IMR-90 (cell line): ENCODE measurements at regions of chr17 and their contacts with region 1.

Region 1: DNA sequence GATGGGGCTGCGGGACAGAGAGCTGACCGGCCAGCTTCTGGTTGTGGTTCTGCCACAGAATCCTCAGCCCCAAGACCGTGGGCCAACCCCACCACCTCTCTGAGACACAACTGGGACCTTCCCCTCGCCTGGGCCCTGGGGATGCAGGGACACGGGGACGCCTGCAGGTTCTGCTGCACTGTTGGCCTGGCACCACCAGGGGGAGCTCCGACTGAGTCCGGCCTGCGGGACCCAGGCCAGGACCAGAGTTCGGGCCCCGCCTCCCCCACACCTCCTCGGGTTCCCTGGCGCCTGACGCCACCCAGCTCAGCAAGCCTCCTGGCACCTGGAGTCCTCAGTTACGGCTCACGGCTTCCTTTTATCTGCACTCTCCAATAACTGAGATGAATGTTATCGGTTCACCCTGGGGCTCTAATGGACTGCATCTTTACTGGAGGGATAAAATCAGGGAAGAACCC is 27.3 kb downstream of the TBC1D16 start:
- DNase-seq: peak; percentile 48
- ATAC-seq: peak; percentile 93
- H3K4me3 ChIP-seq: no peak overlapping the region
- H3K27ac ChIP-seq: no peak overlapping the region
- H3K4me1 ChIP-seq: no peaks in the 10 kb centered on the region; the same call in 1 of the 2 replicates
- H3K27me3 ChIP-seq: no peaks in the 10 kb centered on the region
- CTCF ChIP-seq: peak; percentile 85
- POLR2A ChIP-seq: no peak
- RAD21 ChIP-seq: peak; percentile 69

Region 2: DNA sequence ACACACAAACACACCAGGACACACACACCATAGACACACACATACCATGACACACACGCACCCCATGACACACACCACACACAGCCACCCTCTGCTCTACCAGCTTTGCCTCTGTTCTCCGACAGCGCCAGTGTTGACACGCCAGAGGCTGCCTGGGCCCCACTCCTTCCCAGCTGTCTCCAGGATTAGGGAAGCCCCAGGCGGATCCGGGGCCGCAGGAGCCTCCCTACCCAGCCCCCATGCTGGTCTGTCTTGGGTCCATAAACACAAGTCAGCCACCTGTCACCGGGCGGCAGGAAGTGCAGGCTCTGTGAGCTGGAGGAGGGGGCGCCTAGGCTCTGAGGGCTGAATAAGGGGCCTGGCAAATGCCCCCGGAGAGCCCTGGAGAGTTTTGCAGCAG is 16.7 kb after region 1 on chr17:
- CTCF ChIA-PET with region 1: no interaction called
- POLR2A ChIA-PET with region 1: no interaction called
- dilution Hi-C with region 1: no loop called
- in situ Hi-C with region 1: no loop called
- intact Hi-C with region 1: no loop called
- DNase-seq: no peak
- ATAC-seq: no peak
- H3K4me3 ChIP-seq: no peak overlapping the region
- H3K27ac ChIP-seq: no peak overlapping the region
- H3K4me1 ChIP-seq: peaks cover 22% of the 10 kb centered on the region
- H3K27me3 ChIP-seq: no peaks in the 10 kb centered on the region
- CTCF ChIP-seq: no peak
- POLR2A ChIP-seq: no peak
- RAD21 ChIP-seq: no peak

Region 3: DNA sequence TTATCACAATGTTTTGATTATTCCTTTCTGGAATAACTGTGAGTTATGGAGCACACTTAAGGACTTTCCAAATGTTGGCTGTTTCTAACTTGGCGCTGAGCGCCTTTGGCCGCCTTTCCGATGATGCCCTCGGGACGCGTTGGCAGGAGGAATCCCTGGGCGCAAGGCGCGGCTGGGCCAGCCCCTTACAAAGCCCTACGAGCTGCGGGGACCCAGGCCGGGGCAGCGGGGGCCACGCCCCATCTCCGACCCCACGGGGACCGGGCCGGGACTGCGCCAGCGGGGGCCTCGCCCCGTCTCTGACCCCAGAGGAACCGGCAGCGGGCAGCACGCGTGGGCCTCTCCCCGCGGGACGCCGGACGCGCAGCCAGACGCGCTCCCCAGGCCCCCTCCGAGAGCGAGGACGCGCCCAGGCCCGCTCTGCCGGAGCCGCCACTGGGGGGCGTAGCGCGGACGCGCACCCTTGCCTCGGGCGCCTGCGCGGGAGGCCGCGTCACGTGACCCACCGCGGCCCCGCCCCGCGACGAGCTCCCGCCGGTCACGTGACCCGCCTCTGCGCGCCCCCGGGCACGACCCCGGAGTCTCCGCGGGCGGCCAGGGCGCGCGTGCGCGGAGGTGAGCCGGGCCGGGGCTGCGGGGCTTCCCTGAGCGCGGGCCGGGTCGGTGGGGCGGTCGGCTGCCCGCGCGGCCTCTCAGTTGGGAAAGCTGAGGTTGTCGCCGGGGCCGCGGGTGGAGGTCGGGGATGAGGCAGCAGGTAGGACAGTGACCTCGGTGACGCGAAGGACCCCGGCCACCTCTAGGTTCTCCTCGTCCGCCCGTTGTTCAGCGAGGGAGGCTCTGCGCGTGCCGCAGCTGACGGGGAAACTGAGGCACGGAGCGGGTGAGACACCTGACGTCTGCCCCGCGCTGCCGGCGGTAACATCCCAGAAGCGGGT is 92.9 kb after region 1 on chr17 and contains the start of gene GAA:
- CTCF ChIA-PET with region 1: no interaction called
- POLR2A ChIA-PET with region 1: no interaction called
- dilution Hi-C with region 1: no loop called
- in situ Hi-C with region 1: no loop called
- intact Hi-C with region 1: loop called (anchors 1 kb)
- DNase-seq: peak; percentile 76
- ATAC-seq: peak; percentile 92
- H3K4me3 ChIP-seq: peak within 1 kb of the TSS; percentile 98
- H3K27ac ChIP-seq: peak within 1 kb of the TSS; percentile 76
- H3K4me1 ChIP-seq: peaks cover 6% of the 10 kb centered on the region
- H3K27me3 ChIP-seq: no peaks in the 10 kb centered on the region
- CTCF ChIP-seq: peak; percentile 91
- POLR2A ChIP-seq: peak; percentile 50; the same call in 1 of the 2 replicates
- RAD21 ChIP-seq: peak; percentile 42; the same call in 1 of the 2 replicates
- total RNA-seq, gene GAA: 2.2 and 3.3 TPM in 2 replicates

Region 4: DNA sequence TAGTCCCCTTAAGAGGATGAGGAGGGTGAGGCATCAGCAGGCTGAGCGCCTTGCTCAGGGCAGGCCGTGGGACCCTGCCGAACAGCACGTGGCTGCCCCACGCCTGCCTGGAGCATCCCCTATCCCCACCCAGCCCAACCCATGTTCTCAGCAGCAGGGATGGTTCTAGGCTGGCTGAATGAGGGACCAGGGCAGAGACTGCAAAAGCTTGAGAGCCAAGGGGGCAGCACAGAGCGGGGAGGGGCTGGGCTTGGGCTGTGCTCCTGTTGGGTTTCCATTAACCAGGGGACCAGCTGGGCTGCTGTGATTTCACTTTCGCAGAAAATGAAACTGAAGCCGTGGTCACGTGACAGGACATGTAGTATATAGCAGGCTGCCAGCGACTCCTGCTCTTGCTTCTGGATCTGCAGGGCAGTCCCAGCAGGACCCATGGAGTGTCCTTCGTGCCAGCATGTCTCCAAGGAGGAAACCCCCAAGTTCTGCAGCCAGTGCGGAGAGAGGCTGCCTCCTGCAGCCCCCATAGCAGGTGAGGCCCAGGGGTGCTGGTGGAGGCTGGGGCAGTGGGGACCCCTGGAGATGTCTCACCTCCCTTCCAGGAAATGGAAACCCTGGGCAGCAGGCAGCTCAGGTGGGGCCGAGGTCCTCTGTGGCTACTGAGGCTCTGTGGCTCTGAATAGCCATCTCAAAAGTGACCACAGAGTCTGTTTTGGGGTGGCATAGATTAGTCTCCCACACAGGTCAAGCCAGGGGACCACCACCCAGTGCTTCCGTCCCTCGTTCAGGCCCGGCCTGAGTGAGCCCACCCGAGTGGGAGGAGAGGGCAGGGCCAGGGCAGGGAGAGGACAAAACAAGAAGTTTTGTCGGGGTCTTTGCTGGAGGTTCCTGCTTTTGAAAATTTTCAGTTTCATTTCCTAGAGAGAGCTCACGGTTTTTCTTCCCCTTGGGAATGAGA is 255.1 kb after region 1 on chr17:
- CTCF ChIA-PET with region 1: no interaction called
- POLR2A ChIA-PET with region 1: no interaction called
- dilution Hi-C with region 1: no loop called
- in situ Hi-C with region 1: no loop called
- intact Hi-C with region 1: loop called (anchors 5 kb)
- DNase-seq: peak; percentile 89
- ATAC-seq: peak; percentile 46
- H3K4me3 ChIP-seq: 0 out of 2 replicates have a peak overlapping the region, but pooled peaks have one; percentile 1
- H3K27ac ChIP-seq: peak overlapping the region; percentile 66
- H3K4me1 ChIP-seq: peaks cover 20% of the 10 kb centered on the region
- H3K27me3 ChIP-seq: no peaks in the 10 kb centered on the region
- CTCF ChIP-seq: peak; percentile 28; the same call in 1 of the 2 replicates
- POLR2A ChIP-seq: peak; percentile 44; the same call in 1 of the 2 replicates
- RAD21 ChIP-seq: peak; percentile 40